HEK293 (cell line): ENCODE measurements at regions of chr15 and their contacts with region 1.

Region 1: DNA sequence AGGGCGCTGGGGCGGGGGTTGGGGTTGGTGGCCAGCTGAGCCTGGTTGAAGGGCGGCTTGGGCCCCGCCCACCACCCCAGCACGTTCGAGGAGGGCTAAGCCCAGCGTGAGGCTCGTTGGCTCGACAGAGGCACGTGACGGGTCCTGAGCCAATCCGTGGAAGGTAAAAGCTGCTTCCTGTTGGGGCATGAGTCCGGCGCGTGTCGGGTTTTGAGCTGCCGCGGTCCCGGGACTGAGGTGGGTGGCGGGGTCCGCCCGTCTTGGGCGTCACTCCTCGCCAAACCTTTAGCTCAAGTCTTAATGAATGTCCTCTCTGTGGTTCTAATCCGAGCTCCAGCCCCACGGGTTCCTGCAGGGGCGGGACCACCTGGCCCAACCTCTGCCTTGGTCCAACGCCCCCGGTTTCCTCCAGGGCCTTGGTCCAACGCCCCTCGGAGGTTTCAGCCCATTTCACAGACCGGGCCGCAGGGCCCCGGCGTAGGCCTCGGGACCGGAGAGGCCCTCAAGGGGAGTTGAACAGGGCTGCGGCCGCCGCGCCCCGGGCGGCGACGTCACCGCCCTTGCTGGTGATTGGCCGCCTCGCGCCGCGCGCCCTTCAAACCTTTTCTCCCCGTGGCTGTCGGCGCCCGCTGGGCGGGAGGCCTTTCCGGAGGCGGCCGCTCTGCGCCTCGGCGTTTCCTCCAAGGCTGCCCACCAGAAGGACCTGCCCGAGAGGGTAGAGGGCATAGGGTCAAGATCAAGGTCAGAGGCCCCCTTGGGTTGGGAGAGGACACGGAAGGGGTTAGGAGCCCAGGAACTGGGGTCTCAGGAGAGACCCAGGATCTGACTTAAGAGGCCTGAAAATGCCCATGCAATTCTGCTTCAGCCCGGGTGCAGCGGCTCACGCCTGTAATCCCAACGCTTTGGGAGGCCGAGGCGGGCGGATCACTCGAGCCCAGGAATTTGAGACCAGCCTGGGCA is at the start of gene RCCD1:
- H3K4me3 ChIP-seq: peak within 1 kb of the TSS; percentile 73
- H3K27ac ChIP-seq: peak within 1 kb of the TSS; percentile 88
- H3K4me1 ChIP-seq: no peaks in the 10 kb centered on the region; the same call in 1 of the 2 replicates
- CTCF ChIP-seq: no peak

Region 2: GRCh38 chr15:90902040-90902839 is 52.8 kb before region 1 on chr15:
- CTCF ChIA-PET with region 1: interaction called, 5 read pairs
- POLR2A ChIA-PET with region 1: interaction called, 11 read pairs
- H3K4me3 ChIP-seq: peak overlapping the region; percentile 74
- H3K27ac ChIP-seq: peak overlapping the region; percentile 98
- H3K4me1 ChIP-seq: peaks cover 13% of the 10 kb centered on the region
- CTCF ChIP-seq: peak; percentile 97

Region 3: GRCh38 chr15:90982135-90982534 is 27.1 kb after region 1 on chr15:
- CTCF ChIA-PET with region 1: interaction called, 43 read pairs
- POLR2A ChIA-PET with region 1: interaction called, 4 read pairs
- H3K4me3 ChIP-seq: no peak overlapping the region
- H3K27ac ChIP-seq: no peak overlapping the region
- H3K4me1 ChIP-seq: peaks cover 4% of the 10 kb centered on the region
- CTCF ChIP-seq: no peak

Region 4: GRCh38 chr15:91032919-91033803 is 78.2 kb after region 1 on chr15:
- CTCF ChIA-PET with region 1: interaction called, 40 read pairs
- POLR2A ChIA-PET with region 1: interaction called, 7 read pairs
- H3K4me3 ChIP-seq: no peak overlapping the region
- H3K27ac ChIP-seq: no peak overlapping the region
- H3K4me1 ChIP-seq: no peaks in the 10 kb centered on the region
- CTCF ChIP-seq: peak; percentile 96

Region 5: GRCh38 chr15:91271565-91272153 is 316.7 kb after region 1 on chr15:
- CTCF ChIA-PET with region 1: interaction called, 20 read pairs
- POLR2A ChIA-PET with region 1: interaction called, 4 read pairs
- H3K4me3 ChIP-seq: no peak overlapping the region
- H3K27ac ChIP-seq: no peak overlapping the region
- H3K4me1 ChIP-seq: no peaks in the 10 kb centered on the region
- CTCF ChIP-seq: peak; percentile 63